Adrenal gland (tissue), 19 donors: ENCODE measurements at regions of chr5 and their contacts with region 1.

Region 1: DNA sequence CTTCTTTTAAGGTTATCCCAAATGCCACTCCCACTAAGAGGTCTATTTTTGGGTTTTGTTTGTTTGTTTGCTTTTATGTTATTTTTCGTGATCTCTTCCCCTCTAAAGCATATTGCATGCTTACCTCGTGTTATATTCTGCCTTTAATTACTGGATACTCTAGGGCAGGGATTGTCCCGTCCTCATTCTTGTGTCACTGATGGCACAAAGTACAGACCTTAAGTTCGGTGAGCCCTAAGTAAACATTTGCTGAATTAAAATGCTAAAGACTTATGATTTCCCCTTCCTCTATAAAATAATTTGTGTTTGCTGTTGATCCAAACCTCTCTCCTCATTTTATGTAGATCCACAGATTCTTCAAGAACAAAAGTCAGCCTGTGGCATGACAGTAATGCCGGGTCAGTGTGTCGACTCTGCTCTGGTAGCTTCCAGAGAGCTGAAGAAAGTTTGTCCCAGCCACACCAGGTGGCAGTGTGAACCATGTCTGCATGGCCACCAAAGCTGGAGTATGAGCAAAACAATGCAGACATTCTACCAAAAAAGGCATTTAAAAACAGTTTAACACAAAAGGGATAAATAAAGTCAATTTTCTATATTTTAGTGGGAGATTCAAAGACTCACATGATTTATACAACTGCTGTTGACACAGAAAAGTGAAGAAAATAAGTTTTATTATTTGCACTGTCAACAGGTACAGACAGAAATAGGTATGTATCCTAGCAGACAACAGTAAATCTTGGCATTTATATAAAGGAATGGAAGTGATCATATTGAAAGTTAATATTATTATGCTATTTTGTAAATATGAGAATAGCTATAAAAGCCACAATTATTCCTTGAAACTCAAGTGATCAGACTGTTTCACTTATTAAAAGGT is 17.9 kb upstream of the POC5 start:
- DNase-seq: peak; percentile 53 to 79 (median 68)
- H3K4me3 ChIP-seq: no peak overlapping the region
- H3K27ac ChIP-seq: no peak overlapping the region
- H3K4me1 ChIP-seq: no peaks in the 10 kb centered on the region
- H3K27me3 ChIP-seq: no peaks in the 10 kb centered on the region
- CTCF ChIP-seq: peak; percentile 41 to 62 (median 58)
- POLR2A ChIP-seq: no peak

Region 2: GRCh38 chr5:76180814-76181805 is 446.0 kb after region 1 on chr5:
- intact Hi-C with region 1: loop called in 1 of 2 experiments (anchors 10 kb)
- DNase-seq: peak in 4 of 7 donors; percentile 16 to 46 (median 37)
- H3K4me3 ChIP-seq: no peak overlapping the region
- H3K27ac ChIP-seq: no peak overlapping the region
- H3K4me1 ChIP-seq: peaks cover 0 to 7% of the 10 kb centered on the region in 2 donors
- H3K27me3 ChIP-seq: no peaks in the 10 kb centered on the region
- CTCF ChIP-seq: no peak
- POLR2A ChIP-seq: no peak

Region 3: GRCh38 chr5:76256116-76256889 is 521.2 kb after region 1 on chr5:
- intact Hi-C with region 1: loop called in 1 of 2 experiments (anchors 5 kb)
- DNase-seq: peak; percentile 65 to 89 (median 70)
- H3K4me3 ChIP-seq: no peak overlapping the region
- H3K27ac ChIP-seq: no peak overlapping the region
- H3K4me1 ChIP-seq: no peaks in the 10 kb centered on the region
- H3K27me3 ChIP-seq: no peaks in the 10 kb centered on the region
- CTCF ChIP-seq: peak; percentile 20 to 73 (median 66)
- POLR2A ChIP-seq: no peak